BJ (cell line): ENCODE measurements at regions of chr10 and their contacts with region 1.

Region 1: GRCh38 chr10:22285130-22285529 is 31.1 kb upstream of the COMMD3 start:
- DNase-seq: no peak
- H3K4me3 ChIP-seq: no peak overlapping the region
- H3K27me3 ChIP-seq: no peaks in the 10 kb centered on the region
- CTCF ChIP-seq: no peak

Region 2: GRCh38 chr10:22218451-22218850 is 66.7 kb before region 1 on chr10:
- CTCF ChIA-PET with region 1: no interaction called
- POLR2A ChIA-PET with region 1: interaction called, 10 read pairs
- DNase-seq: no peak
- H3K4me3 ChIP-seq: no peak overlapping the region
- H3K27me3 ChIP-seq: no peaks in the 10 kb centered on the region
- CTCF ChIP-seq: no peak